Activated CD4-positive, alpha-beta memory T cell treated with anti-CD3 and anti-CD28 coated beads, Interleukin-2, amount 10 ng/mL, durations not matched to agents 7 days and 5 days (primary cell): ENCODE measurements at regions of chr20 and their contacts with region 1.

Region 1: GRCh38 chr20:64038565-64039292 is 2.7 kb downstream of the C20orf204 start:
- DNase-seq: peak; percentile 84
- H3K4me3 Mint-ChIP-seq: peak overlapping the region; percentile 68
- H3K27ac Mint-ChIP-seq: peak overlapping the region; percentile 35
- H3K4me1 Mint-ChIP-seq: peaks cover 68% of the 10 kb centered on the region
- H3K27me3 Mint-ChIP-seq: peaks cover 5% of the 10 kb centered on the region

Region 2: DNA sequence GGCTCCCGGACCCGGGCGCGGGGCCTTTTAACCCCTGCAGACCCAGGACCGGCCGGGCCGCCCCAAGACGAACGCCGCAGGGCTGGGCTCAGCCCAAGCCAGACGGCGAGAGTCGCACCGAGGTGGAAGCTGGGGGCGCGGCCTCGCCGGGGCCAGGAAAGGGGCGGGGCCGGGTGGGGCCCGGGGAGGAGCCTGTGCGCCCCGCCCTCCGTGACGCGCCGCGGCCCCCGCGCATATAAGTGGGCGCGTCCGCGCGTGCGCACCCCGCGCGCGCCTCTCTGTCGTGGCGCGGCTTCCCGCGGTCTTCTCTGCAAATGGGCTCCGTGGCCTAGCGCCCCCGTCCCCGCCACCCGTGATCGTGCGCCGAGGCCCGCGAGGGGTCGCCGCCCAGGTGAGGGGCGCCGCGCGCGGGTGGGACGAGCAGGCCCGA is 518.2 kb before region 1 on chr20 and contains the start of gene PPDPF:
- CTCF ChIA-PET with region 1: interaction called, 3 read pairs
- POLR2A ChIA-PET with region 1: interaction called, 12 read pairs
- DNase-seq: peak; percentile 89
- H3K4me3 Mint-ChIP-seq: peak within 1 kb of the TSS; percentile 79
- H3K27ac Mint-ChIP-seq: peak within 1 kb of the TSS; percentile 81
- H3K4me1 Mint-ChIP-seq: peaks cover 10% of the 10 kb centered on the region
- H3K27me3 Mint-ChIP-seq: peaks cover 9% of the 10 kb centered on the region
- total RNA-seq, gene PPDPF: 228 to 232 TPM

Region 3: GRCh38 chr20:63756648-63756991 is 282.1 kb before region 1 on chr20:
- CTCF ChIA-PET with region 1: no interaction called
- POLR2A ChIA-PET with region 1: no interaction called
- DNase-seq: peak; percentile 79
- H3K4me3 Mint-ChIP-seq: no peak overlapping the region
- H3K27ac Mint-ChIP-seq: no peak overlapping the region
- H3K4me1 Mint-ChIP-seq: peaks cover 27% of the 10 kb centered on the region
- H3K27me3 Mint-ChIP-seq: peaks cover 17% of the 10 kb centered on the region

Region 4: GRCh38 chr20:63980806-63981728 is 57.7 kb before region 1 on chr20 and contains the start of gene PRPF6:
- CTCF ChIA-PET with region 1: interaction called, 117 read pairs
- POLR2A ChIA-PET with region 1: interaction called, 83 read pairs
- DNase-seq: peak; percentile 97
- H3K4me3 Mint-ChIP-seq: peak within 1 kb of the TSS; percentile 87
- H3K27ac Mint-ChIP-seq: peak within 1 kb of the TSS; percentile 97
- H3K4me1 Mint-ChIP-seq: peaks cover 61% of the 10 kb centered on the region
- H3K27me3 Mint-ChIP-seq: no peaks in the 10 kb centered on the region
- total RNA-seq, gene PRPF6: 58.4 to 60.4 TPM

Region 5: DNA sequence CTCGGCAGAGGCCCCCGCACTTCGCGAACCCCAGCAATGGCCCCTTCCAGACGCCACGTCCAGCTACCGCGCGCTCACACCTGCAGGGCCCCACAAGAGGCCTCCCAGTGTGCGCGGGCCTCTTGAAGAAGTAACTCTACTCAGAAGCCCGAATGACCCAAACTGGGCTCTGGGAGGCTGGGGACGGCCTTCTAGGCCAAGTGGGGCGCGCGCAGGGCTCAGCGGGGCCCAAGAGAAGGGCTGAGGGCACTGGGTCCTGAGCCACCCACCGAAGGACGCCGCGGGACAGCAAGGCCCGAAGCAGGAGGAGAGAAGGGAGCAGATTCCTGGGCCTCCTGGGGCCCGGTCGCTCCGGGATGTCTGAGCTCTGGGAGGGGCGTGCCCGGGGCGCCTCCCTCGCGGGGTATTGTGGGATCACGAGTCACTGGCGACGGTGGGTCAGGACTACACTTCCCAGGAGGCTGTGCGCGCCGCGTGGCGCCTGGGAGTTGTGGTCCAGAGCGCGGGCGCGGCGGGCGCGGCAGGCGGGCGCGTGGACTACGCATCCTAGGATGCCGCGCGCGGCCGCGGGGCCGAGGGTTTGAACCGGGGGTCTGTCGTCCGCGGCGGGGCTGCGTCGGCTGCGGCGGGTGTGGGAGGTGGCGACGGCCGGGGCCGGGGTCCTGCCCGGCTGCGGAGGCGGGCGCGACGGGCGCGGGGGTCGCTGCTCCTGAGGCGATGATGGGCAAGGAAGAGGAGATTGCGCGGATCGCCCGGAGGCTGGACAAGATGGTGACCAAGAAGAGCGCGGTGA is 24.1 kb after region 1 on chr20 and contains the start of gene TCEA2:
- CTCF ChIA-PET with region 1: interaction called, 27 read pairs
- POLR2A ChIA-PET with region 1: interaction called, 16 read pairs
- DNase-seq: peak; percentile 97
- H3K4me3 Mint-ChIP-seq: peak within 1 kb of the TSS; percentile 82
- H3K27ac Mint-ChIP-seq: peak within 1 kb of the TSS; percentile 89
- H3K4me1 Mint-ChIP-seq: peaks cover 65% of the 10 kb centered on the region
- H3K27me3 Mint-ChIP-seq: no peaks in the 10 kb centered on the region
- total RNA-seq, gene TCEA2: 66.3 to 74.1 TPM

Region 6: DNA sequence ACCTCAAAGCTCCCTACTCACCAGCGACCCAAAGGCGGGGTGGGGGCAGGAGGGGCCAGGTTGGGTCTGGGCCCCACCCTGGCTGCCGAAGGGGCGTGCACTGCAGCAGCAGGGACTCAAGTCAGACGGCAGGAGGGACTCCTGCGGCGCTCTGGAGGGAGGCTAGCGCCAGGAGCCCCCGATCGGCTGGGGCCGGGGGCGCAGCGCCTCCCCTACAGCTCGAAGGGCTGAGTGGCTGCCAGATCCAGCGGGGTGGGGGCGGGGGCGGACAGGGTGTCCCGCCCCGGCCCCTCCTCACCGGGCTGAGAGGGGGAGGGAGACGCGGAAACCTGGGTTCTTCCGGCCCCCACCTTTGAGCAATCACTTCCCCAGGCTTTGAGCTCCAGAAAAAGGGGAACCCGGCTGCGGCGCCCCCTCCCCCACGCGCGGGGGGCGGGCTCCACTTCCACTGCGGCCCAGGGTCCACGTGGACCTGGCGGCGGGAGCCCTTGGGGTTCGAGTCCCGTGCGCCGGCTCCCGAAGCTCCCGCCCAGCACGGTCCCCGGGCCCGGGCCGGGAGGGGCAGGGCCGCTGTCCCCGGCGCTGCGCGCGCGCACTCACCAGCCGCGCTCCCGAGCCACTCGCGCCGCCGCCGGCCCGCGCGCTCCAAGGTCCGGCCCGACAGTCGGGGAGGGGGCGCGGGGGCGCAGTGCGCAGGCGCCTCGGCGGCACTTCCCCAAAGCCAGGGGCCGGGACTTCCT is 40.7 kb after region 1 on chr20 and contains the start of gene RGS19:
- CTCF ChIA-PET with region 1: interaction called, 13 read pairs
- POLR2A ChIA-PET with region 1: interaction called, 13 read pairs
- DNase-seq: peak; percentile 81
- H3K4me3 Mint-ChIP-seq: peak within 1 kb of the TSS; percentile 93
- H3K27ac Mint-ChIP-seq: peak within 1 kb of the TSS; percentile 92
- H3K4me1 Mint-ChIP-seq: peaks cover 54% of the 10 kb centered on the region
- H3K27me3 Mint-ChIP-seq: peaks cover 19% of the 10 kb centered on the region
- total RNA-seq, gene RGS19: 119 to 122 TPM

Region 7: DNA sequence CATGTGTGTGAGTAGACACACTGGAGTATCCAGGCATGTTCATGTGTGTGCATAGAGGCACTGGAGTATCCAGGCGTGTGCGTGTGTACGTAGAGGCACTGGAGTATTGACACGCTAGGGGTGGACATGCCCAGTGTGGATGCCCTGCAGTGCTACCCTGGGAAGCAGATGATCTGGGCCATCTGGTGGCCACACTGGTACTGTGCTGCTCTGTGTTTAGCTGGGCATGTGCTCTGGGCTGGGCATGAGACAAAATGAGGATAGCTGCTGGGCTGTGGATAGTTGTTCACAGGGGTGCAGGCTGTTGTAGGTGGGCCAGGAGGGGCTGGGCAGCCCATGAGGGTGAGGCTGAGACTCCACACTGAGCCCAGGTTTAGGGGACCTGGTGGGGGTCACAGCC is 92.7 kb after region 1 on chr20:
- CTCF ChIA-PET with region 1: no interaction called
- POLR2A ChIA-PET with region 1: no interaction called
- DNase-seq: no peak
- H3K4me3 Mint-ChIP-seq: no peak overlapping the region
- H3K27ac Mint-ChIP-seq: no peak overlapping the region
- H3K4me1 Mint-ChIP-seq: no peaks in the 10 kb centered on the region
- H3K27me3 Mint-ChIP-seq: peaks cover 11% of the 10 kb centered on the region